Mammary epithelial cell (primary cell): ENCODE measurements at regions of chr2 and their contacts with region 1.

Region 1: DNA sequence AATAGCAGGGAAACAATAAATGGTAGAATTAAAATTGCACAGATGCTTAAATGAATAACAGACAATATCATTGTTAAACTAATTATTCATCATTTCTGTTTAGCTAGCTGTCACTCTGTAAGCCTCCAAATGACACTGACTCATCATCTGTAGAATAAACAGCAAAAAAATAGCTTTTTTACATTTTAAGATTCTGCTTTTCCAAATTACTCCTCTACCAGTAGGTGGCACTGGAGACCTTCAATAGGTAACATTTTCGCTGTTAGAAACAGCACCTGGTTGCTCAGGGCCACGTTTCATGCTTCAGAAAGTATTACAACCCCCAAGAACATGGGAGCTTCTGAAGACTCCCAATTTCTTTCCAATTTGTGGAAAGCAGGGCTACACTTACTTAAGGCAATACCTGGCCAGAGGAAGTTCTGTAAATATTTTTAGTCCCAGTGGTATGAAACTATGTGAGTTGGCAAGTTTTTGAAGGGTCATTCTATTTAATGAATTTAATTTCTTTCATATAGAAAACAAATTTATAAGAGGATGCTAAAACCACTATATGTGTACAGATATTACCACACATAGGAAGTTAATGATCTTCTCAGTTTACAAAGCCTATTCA is 45.4 kb downstream of the TTN start:
- DNase-seq: peak; percentile 37
- H3K4me3 ChIP-seq: no peak overlapping the region
- H3K27ac ChIP-seq: no peak overlapping the region
- H3K4me1 ChIP-seq: peaks cover 19% of the 10 kb centered on the region
- H3K27me3 ChIP-seq: no peaks in the 10 kb centered on the region
- CTCF ChIP-seq: peak; percentile 78 to 83

Region 2: DNA sequence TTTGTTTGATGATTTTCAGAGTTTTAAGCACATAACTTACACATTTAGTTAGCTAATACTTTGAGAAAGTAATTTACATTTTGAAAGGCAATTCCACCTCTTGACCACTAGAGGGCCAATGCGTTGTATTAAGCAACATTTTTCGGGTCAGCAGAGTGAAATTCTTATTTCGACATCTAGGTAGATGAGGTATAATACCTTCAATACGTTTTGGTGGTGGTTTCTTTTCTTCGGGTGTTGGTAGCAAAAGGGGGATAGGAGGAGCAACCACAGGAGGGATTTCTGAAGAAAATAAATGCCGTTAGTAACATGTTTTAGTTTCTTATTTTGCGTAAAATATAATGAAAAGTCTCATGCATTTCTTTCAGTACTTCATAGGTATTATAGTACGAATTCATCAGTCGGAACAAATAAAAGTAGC is 60.9 kb before region 1 on chr2:
- CTCF ChIA-PET with region 1: no interaction called
- dilution Hi-C with region 1: no loop called
- in situ Hi-C with region 1: no loop called
- intact Hi-C with region 1: no loop called
- DNase-seq: peak; percentile 8
- H3K4me3 ChIP-seq: no peak overlapping the region
- H3K27ac ChIP-seq: no peak overlapping the region
- H3K4me1 ChIP-seq: no peaks in the 10 kb centered on the region
- H3K27me3 ChIP-seq: peaks cover 4% of the 10 kb centered on the region
- CTCF ChIP-seq: peak; percentile 89 to 97

Region 3: DNA sequence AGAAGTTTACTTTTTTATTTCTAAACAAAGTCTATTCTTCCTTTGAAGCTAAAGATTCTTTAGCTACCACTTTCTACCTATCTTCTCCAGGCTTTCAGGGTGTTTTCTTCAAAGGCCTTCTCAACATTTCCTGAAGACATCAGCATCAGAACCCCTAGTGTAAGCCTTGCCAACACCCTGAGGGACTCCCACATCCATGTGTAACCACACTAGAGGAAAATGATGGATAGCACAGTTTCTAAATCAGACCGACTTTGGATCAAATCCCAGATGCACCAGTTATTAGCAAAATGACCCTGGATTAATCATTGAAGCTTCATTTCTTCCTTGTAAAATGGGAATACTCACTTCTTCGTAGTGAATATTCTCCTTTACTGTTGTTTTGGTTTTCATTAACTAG is 50.0 kb after region 1 on chr2:
- CTCF ChIA-PET with region 1: no interaction called
- dilution Hi-C with region 1: no loop called
- in situ Hi-C with region 1: no loop called
- intact Hi-C with region 1: no loop called
- DNase-seq: no peak
- H3K4me3 ChIP-seq: no peak overlapping the region
- H3K27ac ChIP-seq: no peak overlapping the region
- H3K4me1 ChIP-seq: no peaks in the 10 kb centered on the region
- H3K27me3 ChIP-seq: no peaks in the 10 kb centered on the region
- CTCF ChIP-seq: no peak

Region 4: GRCh38 chr2:178914259-178914849 is 152.5 kb after region 1 on chr2:
- CTCF ChIA-PET with region 1: no interaction called
- dilution Hi-C with region 1: no loop called
- in situ Hi-C with region 1: no loop called
- intact Hi-C with region 1: loop called (anchors 1 kb)
- DNase-seq: peak; percentile 75
- H3K4me3 ChIP-seq: no peak overlapping the region
- H3K27ac ChIP-seq: no peak overlapping the region
- H3K4me1 ChIP-seq: peaks cover 11% of the 10 kb centered on the region
- H3K27me3 ChIP-seq: no peaks in the 10 kb centered on the region
- CTCF ChIP-seq: peak; percentile 87 to 92

Region 5: DNA sequence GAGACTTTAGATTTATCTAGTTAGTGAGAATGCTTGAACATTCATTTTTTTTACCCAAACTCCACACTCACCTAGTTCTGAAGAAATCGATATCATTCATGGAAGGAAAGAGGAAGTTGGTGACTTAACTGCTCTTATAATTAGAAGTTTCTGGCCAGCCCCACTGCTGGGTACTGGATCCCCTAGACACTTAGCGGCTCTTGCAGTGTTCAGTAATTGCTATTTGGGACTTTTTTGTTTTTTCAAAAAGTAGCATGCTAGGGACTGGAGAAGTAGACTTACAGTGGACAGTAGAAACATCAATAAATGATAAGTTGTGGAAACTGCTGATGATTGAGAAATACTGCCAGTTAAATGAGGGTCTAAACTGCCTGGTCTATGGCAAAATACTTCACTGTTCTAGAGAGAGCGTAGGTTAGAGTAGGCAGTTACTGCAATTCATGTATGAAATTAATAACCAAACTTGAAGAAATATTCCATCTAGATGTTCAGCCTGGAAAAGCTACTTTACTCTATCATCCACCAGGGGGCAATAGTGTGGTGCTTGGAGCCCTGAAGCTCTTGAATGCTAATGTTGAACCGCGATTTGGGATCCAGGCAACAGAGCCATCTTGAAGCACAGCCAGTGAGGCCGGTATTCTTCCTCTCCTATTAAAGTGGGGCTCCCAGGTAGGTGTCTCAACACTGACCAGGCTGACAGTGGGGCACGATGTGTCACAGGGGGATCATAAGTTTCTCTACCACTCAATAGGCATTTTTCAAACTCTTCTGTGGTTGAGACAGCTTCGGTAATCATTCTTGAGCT is 648.9 kb after region 1 on chr2:
- CTCF ChIA-PET with region 1: no interaction called
- dilution Hi-C with region 1: no loop called
- in situ Hi-C with region 1: no loop called
- intact Hi-C with region 1: loop called (anchors 10 kb)
- DNase-seq: peak; percentile 48
- H3K4me3 ChIP-seq: no peak overlapping the region
- H3K27ac ChIP-seq: no peak overlapping the region
- H3K4me1 ChIP-seq: no peaks in the 10 kb centered on the region
- H3K27me3 ChIP-seq: no peaks in the 10 kb centered on the region
- CTCF ChIP-seq: peak; percentile 80 to 84

Region 6: GRCh38 chr2:179550214-179550613 is 788.3 kb after region 1 on chr2:
- CTCF ChIA-PET with region 1: interaction called, 12 read pairs
- dilution Hi-C with region 1: no loop called
- in situ Hi-C with region 1: no loop called
- intact Hi-C with region 1: no loop called
- DNase-seq: no peak
- H3K4me3 ChIP-seq: no peak overlapping the region
- H3K27ac ChIP-seq: no peak overlapping the region
- H3K4me1 ChIP-seq: no peaks in the 10 kb centered on the region
- H3K27me3 ChIP-seq: no peaks in the 10 kb centered on the region
- CTCF ChIP-seq: no peak